ENCODE measurements at regions of chr10 and their contacts with region 1.

Region 1: GRCh38 chr10:123994417-123995081 is 98.8 kb downstream of the CHST15 start:
- DNase-seq: peak; percentile 96
- H3K4me3 ChIP-seq: peak overlapping the region in 1 of 2 experiments; percentile 23; a peak in 1 of 4 replicates
- H3K27ac ChIP-seq: no peak overlapping the region
- H3K4me1 ChIP-seq: no peaks in the 10 kb centered on the region; a peak in 1 of 4 replicates
- H3K27me3 ChIP-seq: no peaks in the 10 kb centered on the region
- CTCF ChIP-seq: peak; percentile 71
- EP300 ChIP-seq: no peak
- RAD21 ChIP-seq: peak; percentile 92

Region 2: DNA sequence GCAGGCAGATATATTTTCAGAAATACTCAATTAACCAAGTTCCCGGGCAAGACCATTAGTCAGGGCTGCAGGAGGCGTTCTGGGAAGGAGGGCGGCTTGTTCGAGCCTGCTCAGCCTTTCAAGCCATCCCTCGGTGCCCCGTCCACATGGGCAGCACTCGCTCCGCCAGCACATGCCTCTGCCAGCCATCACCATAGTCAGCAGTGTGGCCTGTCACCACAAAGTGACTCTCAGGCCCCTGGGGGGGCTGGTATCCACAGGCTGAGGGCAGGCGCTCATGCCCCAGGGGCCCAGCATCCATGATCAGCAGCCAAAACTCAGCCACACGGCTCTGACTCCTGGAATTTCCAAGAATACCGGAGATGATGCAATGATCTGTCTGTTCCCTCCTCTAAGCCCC is 16.9 kb after region 1 on chr10:
- CTCF ChIA-PET with region 1: interaction called, 38 read pairs
- POLR2A ChIA-PET with region 1: no interaction called
- DNase-seq: no peak
- H3K4me3 ChIP-seq: no peak overlapping the region
- H3K27ac ChIP-seq: no peak overlapping the region
- H3K4me1 ChIP-seq: no peaks in the 10 kb centered on the region
- H3K27me3 ChIP-seq: no peaks in the 10 kb centered on the region
- CTCF ChIP-seq: no peak
- EP300 ChIP-seq: no peak
- RAD21 ChIP-seq: no peak

Region 3: DNA sequence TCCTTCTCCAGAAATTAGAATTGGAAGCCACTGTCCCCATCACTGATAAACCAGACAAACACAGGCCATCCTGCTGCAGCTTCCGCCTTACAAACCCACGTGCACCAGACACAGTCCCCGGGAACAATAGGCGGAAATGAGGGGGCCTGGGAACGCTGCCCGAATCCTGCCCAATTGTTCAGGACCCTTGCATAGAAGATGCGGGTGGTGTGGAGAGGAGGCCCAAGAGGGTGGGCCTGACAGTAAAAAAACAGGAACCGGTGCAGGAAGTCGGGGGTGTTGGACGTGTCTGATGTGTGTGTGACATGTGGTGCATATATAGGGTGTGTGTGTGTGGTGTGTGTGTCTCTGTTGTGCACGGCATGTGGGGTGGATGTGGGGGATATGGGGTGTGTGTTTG is 125.4 kb after region 1 on chr10:
- CTCF ChIA-PET with region 1: interaction called, 11 read pairs
- POLR2A ChIA-PET with region 1: no interaction called
- DNase-seq: no peak
- H3K4me3 ChIP-seq: no peak overlapping the region
- H3K27ac ChIP-seq: no peak overlapping the region
- H3K4me1 ChIP-seq: peaks cover 0 to 6% of the 10 kb centered on the region in 2 experiments; a peak in 1 of 4 replicates
- H3K27me3 ChIP-seq: no peaks in the 10 kb centered on the region
- CTCF ChIP-seq: no peak
- EP300 ChIP-seq: no peak
- RAD21 ChIP-seq: no peak

Region 4: DNA sequence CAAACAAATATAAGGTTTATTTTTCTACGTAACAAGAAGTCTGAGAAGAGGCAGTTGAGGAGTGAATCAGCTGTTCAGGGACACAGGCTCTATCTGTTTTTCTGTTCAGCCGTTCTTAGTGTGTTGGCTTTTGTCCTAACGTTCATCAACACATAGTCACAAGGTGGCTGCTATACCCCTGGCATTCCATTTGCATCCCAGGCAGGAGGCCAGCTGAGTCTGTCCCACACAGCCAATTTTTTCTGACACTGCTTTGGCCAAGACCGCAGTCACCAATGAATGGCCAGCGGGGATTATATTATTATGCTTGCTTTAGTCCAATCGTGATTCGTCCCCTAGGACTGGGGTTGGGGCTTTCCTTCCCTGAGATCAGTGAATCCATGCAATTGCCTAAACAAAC is 242.3 kb after region 1 on chr10:
- CTCF ChIA-PET with region 1: interaction called, 28 read pairs
- POLR2A ChIA-PET with region 1: no interaction called
- DNase-seq: no peak
- H3K4me3 ChIP-seq: no peak overlapping the region
- H3K27ac ChIP-seq: peak overlapping the region in 1 of 2 experiments; percentile 48; a peak in 2 of 4 replicates
- H3K4me1 ChIP-seq: peaks cover 0 to 28% of the 10 kb centered on the region in 2 experiments; a peak in 2 of 4 replicates
- H3K27me3 ChIP-seq: no peaks in the 10 kb centered on the region
- CTCF ChIP-seq: no peak
- EP300 ChIP-seq: no peak
- RAD21 ChIP-seq: no peak

Region 5: GRCh38 chr10:124296121-124296812 is 301.7 kb after region 1 on chr10:
- CTCF ChIA-PET with region 1: interaction called, 21 read pairs
- POLR2A ChIA-PET with region 1: no interaction called
- DNase-seq: peak; percentile 53
- H3K4me3 ChIP-seq: no peak overlapping the region
- H3K27ac ChIP-seq: no peak overlapping the region
- H3K4me1 ChIP-seq: peaks cover 0 to 36% of the 10 kb centered on the region in 2 experiments; a peak in 1 of 4 replicates
- H3K27me3 ChIP-seq: no peaks in the 10 kb centered on the region
- CTCF ChIP-seq: no peak
- EP300 ChIP-seq: peak in 1 of 2 experiments; percentile 44; a peak in 1 of 4 replicates
- RAD21 ChIP-seq: peak; percentile 38

Region 6: DNA sequence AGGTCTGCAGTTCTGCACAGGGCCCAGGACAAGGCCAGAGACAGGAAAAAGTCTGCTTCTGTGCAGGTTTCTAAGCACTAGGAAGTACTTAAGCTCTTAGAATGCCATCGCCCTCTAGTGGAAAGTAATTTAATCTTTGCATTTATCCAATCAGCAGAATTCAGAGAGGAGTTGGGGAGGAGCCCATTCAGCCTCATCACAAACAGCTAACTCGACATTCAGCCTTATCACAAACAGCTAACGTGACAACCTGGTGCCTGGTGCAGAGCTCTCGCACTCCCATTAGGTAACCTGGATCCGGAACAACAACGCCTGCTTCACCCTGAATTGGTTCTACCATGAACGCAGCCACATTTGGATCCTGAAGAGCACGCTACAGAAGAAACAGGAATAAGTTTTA is 409.0 kb after region 1 on chr10:
- CTCF ChIA-PET with region 1: interaction called, 53 read pairs
- POLR2A ChIA-PET with region 1: no interaction called
- DNase-seq: peak; percentile 72
- H3K4me3 ChIP-seq: no peak overlapping the region; a peak in 1 of 4 replicates
- H3K27ac ChIP-seq: no peak overlapping the region
- H3K4me1 ChIP-seq: peaks cover 0 to 2% of the 10 kb centered on the region in 2 experiments; a peak in 1 of 4 replicates
- H3K27me3 ChIP-seq: no peaks in the 10 kb centered on the region
- CTCF ChIP-seq: peak; percentile 72
- EP300 ChIP-seq: no peak; a peak in 1 of 4 replicates
- RAD21 ChIP-seq: peak; percentile 70

Measured in SK-N-SH (cell line).